Mammary epithelial cell (primary cell): ENCODE measurements at regions of chr1 and their contacts with region 1.

Region 1: DNA sequence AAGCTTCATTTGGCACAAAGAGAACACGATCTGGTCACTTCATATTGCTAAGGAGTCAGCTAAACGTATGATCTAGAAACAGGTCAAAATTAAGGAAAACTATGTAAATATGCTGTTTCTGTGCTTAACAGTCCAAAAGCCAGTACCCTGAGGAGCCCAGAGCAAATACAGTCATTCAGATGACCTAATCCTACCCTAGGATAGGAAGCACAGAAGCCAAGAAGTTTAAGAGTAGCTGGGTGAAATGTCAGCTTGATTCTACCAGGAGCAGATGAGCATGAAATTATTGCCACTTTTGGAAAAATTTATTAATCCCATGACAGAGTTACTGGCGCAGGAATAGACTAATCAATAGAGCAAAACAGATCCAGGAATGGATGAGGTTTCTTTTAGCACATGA is 18.3 kb downstream of the SORT1 start:
- DNase-seq: no peak
- H3K4me3 ChIP-seq: no peak overlapping the region
- H3K27ac ChIP-seq: no peak overlapping the region
- H3K4me1 ChIP-seq: no peaks in the 10 kb centered on the region
- H3K27me3 ChIP-seq: no peaks in the 10 kb centered on the region
- CTCF ChIP-seq: no peak

Region 2: DNA sequence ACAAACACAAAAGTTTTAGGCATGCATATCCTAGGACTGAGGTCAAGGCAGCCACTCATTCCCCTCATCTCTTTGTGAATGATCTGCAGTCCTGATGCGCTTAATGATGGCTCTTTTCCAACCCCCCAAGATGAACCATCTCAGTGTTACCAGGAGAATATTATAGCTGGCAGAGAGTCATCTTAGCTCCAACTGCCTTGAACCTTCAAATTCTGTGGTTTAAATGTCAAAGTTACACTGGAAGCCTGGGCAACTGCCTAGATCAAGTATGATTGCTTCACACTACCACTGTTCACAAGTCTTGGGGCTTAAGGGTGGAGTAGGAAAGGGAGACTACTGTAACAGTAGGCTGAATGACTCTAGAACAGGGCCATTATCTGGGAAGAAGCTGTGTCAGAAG is 64.6 kb before region 1 on chr1:
- CTCF ChIA-PET with region 1: no interaction called
- dilution Hi-C with region 1: loop called (anchors 5 kb)
- in situ Hi-C with region 1: no loop called
- intact Hi-C with region 1: no loop called
- DNase-seq: no peak
- H3K4me3 ChIP-seq: no peak overlapping the region
- H3K27ac ChIP-seq: no peak overlapping the region
- H3K4me1 ChIP-seq: no peaks in the 10 kb centered on the region
- H3K27me3 ChIP-seq: no peaks in the 10 kb centered on the region
- CTCF ChIP-seq: no peak

Region 3: GRCh38 chr1:110021285-110021684 is 641.9 kb after region 1 on chr1:
- CTCF ChIA-PET with region 1: no interaction called
- dilution Hi-C with region 1: no loop called
- in situ Hi-C with region 1: no loop called
- intact Hi-C with region 1: no loop called
- DNase-seq: no peak
- H3K4me3 ChIP-seq: no peak overlapping the region
- H3K27ac ChIP-seq: no peak overlapping the region
- H3K4me1 ChIP-seq: no peaks in the 10 kb centered on the region
- H3K27me3 ChIP-seq: no peaks in the 10 kb centered on the region
- CTCF ChIP-seq: no peak